Adrenal gland (tissue), 19 donors: ENCODE measurements at regions of chr20 and their contacts with region 1.

Region 1: GRCh38 chr20:63230800-63231268 is 4.9 kb upstream of the BIRC7 start:
- DNase-seq: peak; percentile 38 to 75 (median 66)
- H3K4me3 ChIP-seq: no peak overlapping the region
- H3K27ac ChIP-seq: no peak overlapping the region
- H3K4me1 ChIP-seq: no peaks in the 10 kb centered on the region
- H3K27me3 ChIP-seq: peaks cover 4% of the 10 kb centered on the region
- CTCF ChIP-seq: peak; percentile 15 to 60 (median 52)
- POLR2A ChIP-seq: no peak

Region 2: GRCh38 chr20:63178889-63179686 is 51.7 kb before region 1 on chr20:
- intact Hi-C with region 1: loop called in 1 of 2 experiments (anchors 5 kb)
- DNase-seq: peak in 6 of 7 donors; percentile 21 to 33 (median 24)
- H3K4me3 ChIP-seq: peak overlapping the region in 1 of 4 donors; percentile 12
- H3K27ac ChIP-seq: no peak overlapping the region
- H3K4me1 ChIP-seq: peaks cover 0 to 20% of the 10 kb centered on the region in 2 donors
- H3K27me3 ChIP-seq: peaks cover 80% of the 10 kb centered on the region
- CTCF ChIP-seq: peak; percentile 14 to 45 (median 30)
- POLR2A ChIP-seq: no peak